Caco-2 (cell line): ENCODE measurements at regions of chr10 and their contacts with region 1.

Region 1: GRCh38 chr10:24952707-24953645 is 570 bp upstream of the PRTFDC1 start:
- DNase-seq: peak; percentile 85 to 91
- H3K4me3 ChIP-seq: peak overlapping the region; percentile 97
- H3K4me3 Mint-ChIP-seq: peak overlapping the region; percentile 84
- H3K27ac Mint-ChIP-seq: peak overlapping the region; percentile 90
- H3K4me1 ChIP-seq: peaks cover 32% of the 10 kb centered on the region
- H3K4me1 Mint-ChIP-seq: peaks cover 23% of the 10 kb centered on the region
- H3K27me3 ChIP-seq: no peaks in the 10 kb centered on the region
- H3K27me3 Mint-ChIP-seq: no peaks in the 10 kb centered on the region
- CTCF ChIP-seq: peak; percentile 47 to 72

Region 2: GRCh38 chr10:24617771-24618391 is 335.1 kb before region 1 on chr10:
- CTCF ChIA-PET with region 1: no interaction called
- POLR2A ChIA-PET with region 1: no interaction called
- intact Hi-C with region 1: loop called (anchors 2 kb)
- DNase-seq: peak; percentile 79 to 87
- H3K4me3 ChIP-seq: no peak overlapping the region
- H3K4me3 Mint-ChIP-seq: peak overlapping the region; percentile 67
- H3K27ac Mint-ChIP-seq: peak overlapping the region; percentile 69
- H3K4me1 ChIP-seq: peaks cover 21% of the 10 kb centered on the region
- H3K4me1 Mint-ChIP-seq: peaks cover 13% of the 10 kb centered on the region
- H3K27me3 ChIP-seq: no peaks in the 10 kb centered on the region
- H3K27me3 Mint-ChIP-seq: no peaks in the 10 kb centered on the region
- CTCF ChIP-seq: peak; percentile 94 to 99

Region 3: DNA sequence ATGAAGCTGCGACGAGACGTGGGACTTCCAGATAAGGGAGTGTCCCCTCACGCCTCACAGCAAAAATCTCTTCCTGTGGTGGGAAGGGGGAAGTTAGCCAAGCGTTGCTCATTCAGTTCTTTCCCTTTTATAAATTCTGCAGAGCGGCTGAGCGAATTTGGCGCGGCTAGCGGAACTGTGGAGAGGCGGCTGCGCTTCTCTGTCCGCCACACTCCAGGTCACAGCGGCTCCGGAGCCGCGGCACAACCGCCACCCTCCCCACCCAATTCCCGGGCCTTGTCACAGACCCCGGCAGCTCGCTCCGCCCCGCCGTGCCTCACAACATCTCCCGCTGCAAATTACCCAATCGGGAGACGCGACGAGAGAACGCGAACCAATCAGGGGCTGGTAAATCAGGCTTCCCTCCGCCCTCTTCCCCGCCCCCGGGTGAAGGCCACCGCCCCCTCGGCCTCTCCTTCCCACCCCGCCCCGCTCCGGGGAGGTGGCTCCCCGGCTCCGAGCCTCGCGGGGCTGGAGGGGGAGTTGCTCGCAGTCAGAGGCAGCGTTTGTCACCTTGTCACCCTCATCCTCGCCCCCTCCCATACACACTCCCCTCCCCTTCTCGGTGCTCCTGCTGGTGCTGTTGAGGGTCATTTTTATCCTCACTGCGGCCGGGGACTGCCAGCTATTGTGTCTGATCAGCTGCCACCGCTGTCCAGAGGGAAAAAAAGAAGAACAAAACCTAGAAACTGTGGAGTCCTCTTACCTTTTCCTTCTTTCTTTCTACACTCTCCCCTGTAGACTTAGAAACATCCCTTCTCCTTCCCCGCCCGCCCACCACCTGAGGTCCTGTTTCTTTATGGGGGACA is 228.4 kb before region 1 on chr10:
- CTCF ChIA-PET with region 1: interaction called, 3 read pairs
- POLR2A ChIA-PET with region 1: interaction called, 3 read pairs
- intact Hi-C with region 1: loop called (anchors 2 kb)
- DNase-seq: peak; percentile 99 to 100
- H3K4me3 ChIP-seq: peak overlapping the region; percentile 85
- H3K4me3 Mint-ChIP-seq: no peak overlapping the region
- H3K27ac Mint-ChIP-seq: peak overlapping the region; percentile 86
- H3K4me1 ChIP-seq: peaks cover 8% of the 10 kb centered on the region
- H3K4me1 Mint-ChIP-seq: peaks cover 21% of the 10 kb centered on the region
- H3K27me3 ChIP-seq: no peaks in the 10 kb centered on the region
- H3K27me3 Mint-ChIP-seq: no peaks in the 10 kb centered on the region
- CTCF ChIP-seq: no peak

Region 4: GRCh38 chr10:24891823-24892222 is 61.2 kb before region 1 on chr10:
- CTCF ChIA-PET with region 1: no interaction called
- POLR2A ChIA-PET with region 1: no interaction called
- intact Hi-C with region 1: no loop called
- DNase-seq: no peak
- H3K4me3 ChIP-seq: no peak overlapping the region
- H3K4me3 Mint-ChIP-seq: no peak overlapping the region
- H3K27ac Mint-ChIP-seq: no peak overlapping the region
- H3K4me1 ChIP-seq: peaks cover 13% of the 10 kb centered on the region
- H3K4me1 Mint-ChIP-seq: peaks cover 18% of the 10 kb centered on the region
- H3K27me3 ChIP-seq: no peaks in the 10 kb centered on the region
- H3K27me3 Mint-ChIP-seq: no peaks in the 10 kb centered on the region
- CTCF ChIP-seq: no peak

Region 5: DNA sequence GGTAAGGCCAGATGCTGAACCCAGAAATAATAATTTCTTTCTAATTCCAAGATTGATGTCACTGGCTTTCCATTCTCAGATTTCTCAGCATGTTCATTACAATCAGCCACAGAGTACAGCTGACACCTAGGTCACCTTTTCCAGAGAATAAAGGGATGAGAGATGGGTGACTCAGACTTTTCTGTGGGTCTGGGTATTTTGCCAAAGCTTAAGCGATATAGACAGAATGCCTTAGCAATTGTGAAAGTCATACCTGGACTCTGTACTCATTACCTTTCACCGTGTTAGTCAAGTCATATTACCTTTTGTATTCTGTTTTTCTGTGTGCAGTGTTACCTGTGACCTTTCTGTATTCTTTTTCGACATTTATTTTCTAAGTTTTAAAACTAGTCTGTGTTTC is 10.0 kb after region 1 on chr10:
- CTCF ChIA-PET with region 1: interaction called, 3 read pairs
- POLR2A ChIA-PET with region 1: interaction called, 6 read pairs
- intact Hi-C with region 1: loop called (anchors 1 kb)
- DNase-seq: peak in 1 of 2 experiments; percentile 61
- H3K4me3 ChIP-seq: no peak overlapping the region
- H3K4me3 Mint-ChIP-seq: peak overlapping the region; percentile 27
- H3K27ac Mint-ChIP-seq: peak overlapping the region; percentile 58
- H3K4me1 ChIP-seq: peaks cover 20% of the 10 kb centered on the region
- H3K4me1 Mint-ChIP-seq: peaks cover 11% of the 10 kb centered on the region
- H3K27me3 ChIP-seq: no peaks in the 10 kb centered on the region
- H3K27me3 Mint-ChIP-seq: no peaks in the 10 kb centered on the region
- CTCF ChIP-seq: no peak